GM12878 (cell line): ENCODE measurements at regions of chr12 and their contacts with region 1.

Region 1: GRCh38 chr12:52992699-52993557 is 13.3 kb upstream of the EIF4B start:
- DNase-seq: no peak
- ATAC-seq: no peak
- H3K4me3 ChIP-seq: no peak overlapping the region
- H3K27ac ChIP-seq: no peak overlapping the region
- H3K4me1 ChIP-seq: no peaks in the 10 kb centered on the region
- H3K27me3 ChIP-seq: no peaks in the 10 kb centered on the region
- CTCF ChIP-seq: no peak
- EP300 ChIP-seq: no peak
- POLR2A ChIP-seq: no peak
- RAD21 ChIP-seq: no peak

Region 2: GRCh38 chr12:52147367-52147972 is 845.5 kb before region 1 on chr12:
- CTCF ChIA-PET with region 1: no interaction called
- POLR2A ChIA-PET with region 1: no interaction called
- RAD21 ChIA-PET with region 1: no interaction called
- SMC1A ChIA-PET with region 1: no interaction called
- in situ Hi-C with region 1: loop called (anchors 5 kb)
- intact Hi-C with region 1: no loop called
- DNase-seq: no peak
- ATAC-seq: no peak
- H3K4me3 ChIP-seq: no peak overlapping the region
- H3K27ac ChIP-seq: no peak overlapping the region
- H3K4me1 ChIP-seq: no peaks in the 10 kb centered on the region
- H3K27me3 ChIP-seq: no peaks in the 10 kb centered on the region; a peak in 2 of 4 replicates
- CTCF ChIP-seq: no peak
- EP300 ChIP-seq: no peak
- POLR2A ChIP-seq: no peak
- RAD21 ChIP-seq: no peak

Region 3: DNA sequence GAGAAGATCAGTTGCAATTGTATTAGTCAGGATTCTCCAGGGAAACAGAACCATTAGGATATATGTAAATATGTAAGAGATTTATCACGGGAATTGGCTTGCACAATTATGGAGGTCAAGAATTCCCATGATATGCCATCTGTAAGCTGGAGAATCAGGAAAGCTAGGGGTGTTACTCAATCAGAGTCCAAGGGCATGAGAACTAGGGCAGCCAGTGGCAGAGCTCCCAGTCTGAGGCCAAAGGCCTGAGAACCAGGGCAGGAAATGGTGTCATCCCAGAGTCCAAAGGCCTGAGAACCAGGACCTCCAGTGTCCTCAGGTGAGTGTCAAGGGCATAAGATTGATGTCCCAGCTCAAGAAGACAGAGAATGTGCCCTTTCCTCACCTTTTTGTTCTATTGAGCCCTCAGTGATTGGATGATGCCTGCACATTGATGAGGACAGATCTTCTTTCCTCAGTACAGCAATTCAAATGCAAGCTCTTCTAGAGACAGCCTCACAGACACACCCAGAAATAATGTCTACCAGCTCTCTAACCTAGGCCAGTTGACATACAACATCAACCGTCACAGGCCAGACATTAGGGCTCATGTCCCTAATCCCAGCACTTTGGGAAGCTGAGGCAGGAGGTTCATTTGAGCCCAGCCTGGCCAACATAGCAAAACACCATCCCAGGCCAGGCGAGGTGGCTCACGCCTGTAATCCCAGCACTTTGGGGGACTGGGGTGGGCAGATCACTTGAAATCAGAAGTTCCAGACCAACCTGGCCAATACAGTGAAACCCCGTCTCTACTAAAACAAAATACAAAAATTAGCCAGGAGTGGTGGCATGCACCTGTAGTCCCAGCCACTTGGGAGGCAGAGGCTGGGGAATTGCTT is 152.7 kb after region 1 on chr12:
- CTCF ChIA-PET with region 1: no interaction called
- POLR2A ChIA-PET with region 1: no interaction called
- RAD21 ChIA-PET with region 1: no interaction called
- SMC1A ChIA-PET with region 1: no interaction called
- in situ Hi-C with region 1: no loop called
- intact Hi-C with region 1: no loop called
- DNase-seq: no peak
- ATAC-seq: no peak
- H3K4me3 ChIP-seq: no peak overlapping the region
- H3K27ac ChIP-seq: no peak overlapping the region
- H3K4me1 ChIP-seq: no peaks in the 10 kb centered on the region
- H3K27me3 ChIP-seq: no peaks in the 10 kb centered on the region
- CTCF ChIP-seq: no peak
- EP300 ChIP-seq: no peak
- POLR2A ChIP-seq: no peak
- RAD21 ChIP-seq: no peak

Region 4: DNA sequence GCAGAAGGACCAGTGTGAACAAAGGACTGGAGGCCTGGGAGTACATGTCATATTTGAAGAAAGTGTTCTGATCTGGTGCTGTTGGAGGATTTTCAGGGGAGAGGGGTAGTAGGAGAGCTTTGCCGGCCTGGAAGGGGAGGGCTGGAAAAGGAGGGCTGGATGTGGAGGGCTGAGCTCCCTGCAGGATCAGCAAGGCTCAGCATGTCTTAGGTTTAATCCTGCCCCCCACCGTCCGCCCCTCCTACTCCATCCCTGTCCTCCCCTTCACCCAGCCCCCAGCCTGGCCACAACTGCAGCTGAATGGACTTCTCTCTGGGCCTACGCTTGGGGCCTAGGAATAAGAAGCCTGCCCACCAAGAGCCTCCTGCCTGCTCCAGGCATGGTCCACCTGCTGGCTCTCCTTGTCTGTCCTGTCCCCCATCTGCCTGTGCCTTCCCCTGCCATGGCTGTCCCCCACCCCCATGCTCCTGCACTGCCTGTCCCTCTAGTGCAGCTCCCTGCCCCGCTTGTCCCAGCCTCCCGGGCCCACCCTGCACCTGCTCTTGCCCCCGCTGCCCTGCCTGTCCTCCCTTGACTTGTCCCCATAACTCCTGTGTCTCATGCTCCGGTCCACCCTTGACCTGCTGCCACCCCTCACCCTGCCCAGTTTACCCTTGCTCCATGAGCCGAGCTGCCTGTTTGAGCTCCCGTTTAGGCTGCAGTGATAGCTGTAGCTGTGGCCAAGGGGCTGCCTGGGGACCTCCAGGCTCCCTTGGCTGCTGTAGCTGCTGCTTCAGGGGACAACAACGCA is 248.9 kb after region 1 on chr12:
- CTCF ChIA-PET with region 1: no interaction called
- POLR2A ChIA-PET with region 1: no interaction called
- RAD21 ChIA-PET with region 1: no interaction called
- SMC1A ChIA-PET with region 1: no interaction called
- in situ Hi-C with region 1: no loop called
- intact Hi-C with region 1: no loop called
- DNase-seq: no peak
- ATAC-seq: peak; percentile 27; the same call in 2 of the 3 replicates
- H3K4me3 ChIP-seq: no peak overlapping the region
- H3K27ac ChIP-seq: no peak overlapping the region
- H3K4me1 ChIP-seq: peaks cover 6% of the 10 kb centered on the region
- H3K27me3 ChIP-seq: peaks cover 0 to 5% of the 10 kb centered on the region in 2 experiments; a peak in 2 of 4 replicates
- CTCF ChIP-seq: no peak
- EP300 ChIP-seq: no peak
- POLR2A ChIP-seq: no peak
- RAD21 ChIP-seq: no peak